ENCODE measurements at regions of chr17 and their contacts with region 1.

Region 1: DNA sequence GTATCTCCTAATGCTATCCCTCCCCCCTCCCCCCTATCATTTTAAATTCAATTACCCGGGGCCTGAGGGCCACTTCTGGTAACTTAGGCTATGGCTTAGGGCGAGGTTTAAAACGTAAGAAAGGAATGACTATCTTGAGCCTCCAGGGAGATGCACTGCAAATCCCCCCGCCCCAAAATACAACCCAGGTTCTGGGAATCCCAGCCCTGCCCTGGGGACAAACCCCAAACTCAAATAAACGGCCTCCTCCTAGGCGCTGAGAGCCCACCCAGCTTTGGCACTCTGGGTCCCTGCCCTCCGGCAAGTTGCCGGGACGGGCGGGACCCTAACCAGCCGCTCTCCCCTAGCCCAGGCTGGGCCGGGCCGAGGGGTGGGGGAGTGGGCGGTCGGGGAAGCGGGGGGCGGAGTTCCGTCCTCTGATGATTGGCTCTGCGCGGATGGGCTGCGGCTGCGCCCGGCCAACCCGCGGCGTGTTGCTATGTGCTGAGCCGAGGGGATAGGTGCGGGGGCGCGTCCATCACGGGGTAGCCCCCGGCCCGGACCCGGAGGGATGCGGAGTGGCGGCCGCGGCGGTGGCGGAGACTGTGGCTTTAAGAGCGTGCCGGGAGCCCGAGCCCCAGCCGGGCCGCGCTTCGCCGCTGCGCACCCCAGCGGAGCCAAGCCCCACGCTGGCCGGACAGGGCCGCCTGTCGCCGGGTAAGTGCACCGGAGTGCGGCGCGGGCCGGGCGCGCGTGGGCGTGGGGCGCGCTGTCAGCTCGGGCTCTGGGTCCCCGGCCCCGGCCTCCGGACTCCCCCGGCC is at the start of gene YPEL2:
- DNase-seq: peak; percentile 97
- H3K4me3 ChIP-seq: peak within 1 kb of the TSS; percentile 83
- H3K27ac ChIP-seq: peak within 1 kb of the TSS; percentile 95
- H3K4me1 ChIP-seq: peaks cover 23% of the 10 kb centered on the region
- H3K27me3 ChIP-seq: no peaks in the 10 kb centered on the region
- CTCF ChIP-seq: no peak
- total RNA-seq, gene YPEL2: 17.2 to 25.7 TPM

Region 2: GRCh38 chr17:59372138-59372857 is 41.0 kb after region 1 on chr17:
- intact Hi-C with region 1: loop called (anchors 5 kb)
- DNase-seq: peak; percentile 79
- H3K4me3 ChIP-seq: no peak overlapping the region
- H3K27ac ChIP-seq: peak overlapping the region; percentile 90
- H3K4me1 ChIP-seq: peaks cover 56% of the 10 kb centered on the region
- H3K27me3 ChIP-seq: no peaks in the 10 kb centered on the region
- CTCF ChIP-seq: no peak

Region 3: GRCh38 chr17:59440784-59441441 is 109.6 kb after region 1 on chr17:
- intact Hi-C with region 1: loop called (anchors 5 kb)
- DNase-seq: peak; percentile 96
- H3K4me3 ChIP-seq: no peak overlapping the region
- H3K27ac ChIP-seq: no peak overlapping the region
- H3K4me1 ChIP-seq: no peaks in the 10 kb centered on the region
- H3K27me3 ChIP-seq: no peaks in the 10 kb centered on the region
- CTCF ChIP-seq: peak; percentile 73

Region 4: DNA sequence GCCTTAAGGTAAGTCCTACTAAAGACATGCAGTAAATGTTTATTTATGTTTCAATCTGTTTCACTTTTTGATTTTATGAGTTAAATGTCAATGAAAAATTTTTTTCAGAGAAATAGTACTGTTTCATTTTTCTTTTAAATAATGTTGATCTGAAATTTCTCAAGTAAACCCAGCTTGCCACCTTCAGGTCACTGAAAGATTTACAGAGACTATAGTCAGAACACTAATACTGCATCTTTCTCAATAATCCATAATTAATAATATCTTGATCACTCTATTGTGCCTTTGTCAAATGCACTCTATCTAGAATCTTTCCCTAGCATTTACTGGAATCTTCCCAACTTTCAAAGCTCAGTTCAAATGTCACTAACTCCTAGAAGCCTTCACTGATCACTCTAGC is 227.6 kb after region 1 on chr17:
- intact Hi-C with region 1: no loop called
- DNase-seq: no peak
- H3K4me3 ChIP-seq: no peak overlapping the region
- H3K27ac ChIP-seq: no peak overlapping the region
- H3K4me1 ChIP-seq: no peaks in the 10 kb centered on the region
- H3K27me3 ChIP-seq: no peaks in the 10 kb centered on the region
- CTCF ChIP-seq: no peak